Transverse colon (tissue), 4 donors: ENCODE measurements at regions of chr16 and their contacts with region 1.

Region 1: DNA sequence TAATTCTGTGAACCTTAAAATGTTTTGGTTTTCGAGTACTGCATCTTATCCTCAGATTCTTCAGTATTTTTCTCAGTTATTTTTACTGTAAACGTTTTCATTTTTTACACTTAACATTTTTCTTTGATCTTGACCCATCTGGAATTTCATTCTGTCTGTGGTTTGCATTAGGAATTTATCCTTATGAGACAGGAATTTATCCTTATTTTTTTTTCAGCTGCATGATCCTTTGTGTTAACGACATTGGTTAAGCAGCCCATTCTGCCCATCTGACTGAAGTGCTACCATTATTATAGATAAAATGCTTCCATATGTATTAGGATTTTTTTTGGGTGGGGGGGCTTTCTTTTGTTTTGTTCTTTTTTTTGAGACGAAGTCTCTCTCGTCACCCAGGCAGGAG is 41.0 kb downstream of the SNX29 start:
- DNase-seq: no peak
- H3K4me3 ChIP-seq: no peak overlapping the region
- H3K27ac ChIP-seq: no peak overlapping the region
- H3K4me1 ChIP-seq: no peaks in the 10 kb centered on the region
- H3K27me3 ChIP-seq: no peaks in the 10 kb centered on the region
- CTCF ChIP-seq: no peak
- EP300 ChIP-seq: no peak
- POLR2A ChIP-seq: no peak

Region 2: GRCh38 chr16:13718748-13719147 is 1701.2 kb after region 1 on chr16:
- in situ Hi-C with region 1: no loop called
- intact Hi-C with region 1: loop called (anchors 5 kb)
- DNase-seq: no peak
- H3K4me3 ChIP-seq: no peak overlapping the region
- H3K27ac ChIP-seq: no peak overlapping the region
- H3K4me1 ChIP-seq: no peaks in the 10 kb centered on the region
- H3K27me3 ChIP-seq: peaks cover 2% of the 10 kb centered on the region
- CTCF ChIP-seq: no peak
- EP300 ChIP-seq: no peak
- POLR2A ChIP-seq: no peak